Posterior cingulate gyrus (tissue), 11 donors: ENCODE measurements at regions of chr14 and their contacts with region 1.

Region 1: GRCh38 chr14:61837336-61838229 is 75.4 kb downstream of the SNAPC1 start:
- DNase-seq: peak; percentile 57 to 97 (median 81)

Region 2: GRCh38 chr14:61730756-61731373 is 106.7 kb before region 1 on chr14:
- intact Hi-C with region 1: loop called (anchors 2 kb)
- DNase-seq: no peak